ENCODE measurements at regions of chr14 and their contacts with region 1.

Region 1: GRCh38 chr14:50003213-50004031 is 110.5 kb downstream of the ARF6 start:
- DNase-seq: peak; percentile 90
- ATAC-seq: peak; percentile 31
- H3K4me3 Mint-ChIP-seq: peak overlapping the region; percentile 82
- H3K27ac Mint-ChIP-seq: peak overlapping the region; percentile 95
- H3K4me1 Mint-ChIP-seq: peaks cover 43% of the 10 kb centered on the region
- H3K27me3 Mint-ChIP-seq: no peaks in the 10 kb centered on the region

Region 2: DNA sequence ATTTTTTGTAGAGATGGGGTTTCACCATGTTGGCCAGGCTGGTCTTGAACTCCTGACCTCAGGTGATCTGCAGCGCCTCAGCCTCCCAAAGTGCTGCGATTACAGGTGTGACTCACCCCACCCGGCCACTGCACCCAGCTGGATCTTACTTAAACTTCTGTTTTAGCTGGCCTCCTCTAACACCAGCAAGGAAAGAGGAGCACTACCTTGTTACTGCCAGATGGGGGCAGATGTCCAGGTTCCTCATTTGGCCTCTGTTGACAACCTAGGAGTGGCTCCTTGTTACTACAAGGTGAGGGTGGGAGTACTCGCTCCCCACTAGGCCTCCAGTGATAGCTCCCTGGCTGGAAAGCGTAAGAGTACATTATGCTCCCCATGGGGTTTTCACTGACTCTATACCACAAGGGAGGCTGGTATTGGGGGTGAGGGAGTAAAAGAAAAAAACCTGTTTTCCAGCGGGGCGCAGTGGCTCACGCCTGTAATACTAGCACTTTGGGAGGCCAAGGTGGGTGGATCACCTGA is 123.7 kb before region 1 on chr14:
- POLR2A ChIA-PET with region 1: interaction called, 14 read pairs
- DNase-seq: peak; percentile 44
- ATAC-seq: peak; percentile 96
- H3K4me3 Mint-ChIP-seq: no peak overlapping the region
- H3K27ac Mint-ChIP-seq: peak overlapping the region; percentile 46
- H3K4me1 Mint-ChIP-seq: peaks cover 15% of the 10 kb centered on the region
- H3K27me3 Mint-ChIP-seq: no peaks in the 10 kb centered on the region

Region 3: DNA sequence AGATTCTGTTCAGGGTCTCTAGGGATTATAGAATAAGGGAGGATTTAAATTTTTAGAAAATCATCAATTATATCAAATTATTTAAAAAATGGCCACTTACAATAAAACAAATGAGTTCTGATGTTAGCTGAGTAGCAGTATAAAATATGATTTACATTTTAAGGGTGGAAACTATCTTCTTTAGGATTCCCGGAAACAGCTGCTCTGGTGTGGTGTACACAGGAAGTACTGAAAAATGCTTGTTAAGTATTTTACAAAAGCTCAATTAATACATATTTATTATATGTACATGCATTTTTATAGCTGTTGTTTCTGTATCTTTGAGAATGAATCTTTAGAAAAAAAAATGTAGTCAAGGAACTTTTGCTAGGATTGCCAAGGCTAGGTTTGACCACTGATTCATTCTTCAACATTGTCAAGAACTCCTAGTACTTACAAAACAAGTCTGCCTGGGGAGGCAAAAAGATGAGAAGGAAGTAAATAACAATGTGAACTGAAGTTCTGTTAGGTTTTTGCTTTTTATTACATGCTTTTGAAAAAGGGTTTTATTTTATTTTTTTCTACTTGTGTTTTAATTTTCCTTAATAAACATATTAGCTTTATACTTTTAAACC is 62.5 kb before region 1 on chr14:
- POLR2A ChIA-PET with region 1: interaction called, 32 read pairs
- DNase-seq: no peak
- ATAC-seq: peak; percentile 48
- H3K4me3 Mint-ChIP-seq: peak overlapping the region; percentile 54
- H3K27ac Mint-ChIP-seq: peak overlapping the region; percentile 74
- H3K4me1 Mint-ChIP-seq: peaks cover 45% of the 10 kb centered on the region
- H3K27me3 Mint-ChIP-seq: no peaks in the 10 kb centered on the region

Region 4: DNA sequence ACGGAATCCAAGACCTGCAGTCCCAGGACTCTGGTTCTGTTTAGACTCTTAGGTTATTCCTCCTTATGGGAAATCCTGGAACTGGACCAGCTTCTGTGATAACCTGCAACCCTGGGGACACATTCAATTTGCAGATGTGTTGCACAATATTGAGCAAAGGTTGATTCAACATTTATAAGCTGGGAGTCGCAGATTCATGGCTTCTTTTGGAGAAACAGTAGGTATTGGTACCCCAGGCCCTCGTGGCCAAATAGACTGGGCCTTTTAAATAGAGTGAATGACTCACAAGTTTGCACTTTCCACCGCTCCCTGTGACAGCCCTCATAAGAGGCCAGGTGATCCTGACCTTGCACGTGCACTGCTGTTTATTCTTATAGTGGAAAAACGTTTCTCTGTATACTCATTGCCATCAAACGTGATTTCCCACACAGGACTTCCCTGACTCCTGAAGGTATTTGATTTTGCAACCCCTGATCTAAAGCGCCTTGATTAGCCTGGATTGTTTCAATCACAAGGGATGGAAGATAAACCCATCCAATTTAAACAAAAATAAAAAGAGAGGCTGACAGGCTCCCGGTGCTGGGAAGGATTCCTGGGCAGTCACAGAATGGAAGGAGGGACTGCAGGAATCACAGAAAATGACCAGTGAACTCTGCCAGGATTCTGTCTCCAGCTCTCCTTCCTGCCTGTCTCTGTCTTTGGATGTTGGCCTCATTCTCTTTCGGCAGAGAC is 14.9 kb after region 1 on chr14:
- POLR2A ChIA-PET with region 1: interaction called, 32 read pairs
- DNase-seq: no peak
- ATAC-seq: no peak
- H3K4me3 Mint-ChIP-seq: no peak overlapping the region
- H3K27ac Mint-ChIP-seq: no peak overlapping the region
- H3K4me1 Mint-ChIP-seq: peaks cover 37% of the 10 kb centered on the region
- H3K27me3 Mint-ChIP-seq: no peaks in the 10 kb centered on the region

Region 5: GRCh38 chr14:50045039-50045711 is 41.8 kb after region 1 on chr14:
- POLR2A ChIA-PET with region 1: interaction called, 85 read pairs
- DNase-seq: peak; percentile 74
- ATAC-seq: peak; percentile 91
- H3K4me3 Mint-ChIP-seq: peak overlapping the region; percentile 54
- H3K27ac Mint-ChIP-seq: peak overlapping the region; percentile 93
- H3K4me1 Mint-ChIP-seq: peaks cover 58% of the 10 kb centered on the region
- H3K27me3 Mint-ChIP-seq: no peaks in the 10 kb centered on the region

Region 6: GRCh38 chr14:50091240-50091913 is 88.0 kb after region 1 on chr14:
- POLR2A ChIA-PET with region 1: interaction called, 42 read pairs
- DNase-seq: no peak
- ATAC-seq: no peak
- H3K4me3 Mint-ChIP-seq: peak overlapping the region; percentile 17
- H3K27ac Mint-ChIP-seq: peak overlapping the region; percentile 77
- H3K4me1 Mint-ChIP-seq: peaks cover 71% of the 10 kb centered on the region
- H3K27me3 Mint-ChIP-seq: no peaks in the 10 kb centered on the region

Region 7: DNA sequence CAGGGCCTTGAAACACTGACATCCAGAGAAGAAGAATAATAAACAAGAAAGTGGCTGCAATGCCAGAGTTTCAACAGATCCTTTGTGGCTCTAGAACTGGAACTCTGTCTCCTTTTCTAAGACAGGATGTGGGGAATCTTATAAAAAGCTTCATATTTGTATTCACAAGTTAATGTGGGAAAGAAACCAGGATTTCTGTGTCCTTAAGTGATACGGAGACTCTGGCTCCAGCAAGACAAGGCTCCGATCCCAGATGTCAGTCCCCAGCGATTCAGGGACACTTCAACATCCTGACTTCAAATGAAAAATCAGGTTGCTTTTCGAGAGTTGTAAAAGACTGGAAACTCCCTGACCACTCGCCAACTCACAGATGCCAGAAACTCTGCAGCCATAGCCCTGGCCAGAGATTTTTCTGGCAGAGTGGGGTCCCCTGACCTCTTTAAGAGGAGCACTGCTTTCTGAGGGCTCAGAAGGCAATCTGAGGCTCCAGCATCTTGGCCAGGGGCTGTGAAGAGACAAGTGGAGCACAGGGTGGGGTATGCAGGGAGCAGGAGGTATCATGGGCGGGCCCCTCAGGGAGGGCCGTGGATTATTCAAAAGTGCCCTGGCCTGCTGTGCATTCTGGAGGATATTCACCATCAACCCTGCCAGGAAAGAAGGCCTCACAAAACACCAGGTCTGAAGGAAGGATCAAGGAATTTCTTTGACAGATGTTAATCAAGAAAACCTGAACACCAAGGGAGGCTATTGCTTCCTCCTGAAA is 1289.9 kb after region 1 on chr14:
- POLR2A ChIA-PET with region 1: no interaction called
- DNase-seq: no peak
- ATAC-seq: no peak
- H3K4me3 Mint-ChIP-seq: no peak overlapping the region
- H3K27ac Mint-ChIP-seq: no peak overlapping the region
- H3K4me1 Mint-ChIP-seq: no peaks in the 10 kb centered on the region
- H3K27me3 Mint-ChIP-seq: no peaks in the 10 kb centered on the region

Measured in activated naive CD8-positive, alpha-beta T cell treated with anti-CD3 and anti-CD28 coated beads, Interleukin-2, amount 10 ng/mL, durations not matched to agents 7 days and 5 days (primary cell).